CD8-positive, alpha-beta T cell (primary cell): ENCODE measurements at regions of chr1 and their contacts with region 1.

Region 1: DNA sequence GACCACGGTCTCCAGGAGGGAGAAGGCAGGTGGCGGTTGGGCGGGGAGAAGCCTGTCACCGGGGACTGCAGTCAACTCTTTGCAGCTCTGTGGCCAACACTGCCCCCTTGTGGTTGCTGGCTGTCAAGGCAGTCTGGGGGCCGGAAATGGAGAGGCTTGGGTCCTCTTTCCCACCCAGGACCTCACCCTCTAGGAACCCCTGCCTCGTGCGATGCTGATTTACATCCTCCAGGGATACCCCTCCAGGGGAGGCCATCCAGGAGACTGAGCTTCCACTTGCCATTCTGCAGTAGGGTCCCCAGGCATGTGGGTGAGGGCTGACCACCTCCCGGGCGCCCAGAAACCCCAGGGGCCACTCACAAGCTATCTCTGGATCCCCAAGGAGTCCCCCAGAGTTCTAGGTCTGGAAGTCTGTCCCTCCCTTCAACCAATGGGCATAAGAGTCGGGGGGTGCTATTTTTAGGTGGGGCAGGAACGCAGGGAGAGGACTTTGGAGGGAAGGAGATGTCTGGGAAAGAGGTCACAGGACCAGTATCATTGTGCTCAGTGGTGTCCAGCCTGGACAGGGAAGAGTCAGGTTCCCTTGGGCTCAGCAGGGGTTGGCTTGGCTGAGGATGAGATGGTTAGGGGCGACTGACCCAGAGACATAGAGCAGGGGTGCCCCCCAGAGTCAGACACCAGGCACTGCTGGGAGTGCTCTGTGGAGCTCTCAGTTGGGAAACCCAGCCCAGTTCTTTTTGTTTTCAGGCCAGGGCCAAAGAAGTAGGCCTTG is 7.1 kb upstream of the GPR61 start:
- DNase-seq: peak; percentile 83 to 97 (median 91)
- ATAC-seq: peak; percentile 90
- H3K4me3 ChIP-seq: peak overlapping the region; percentile 42 to 57
- H3K4me3 Mint-ChIP-seq: peak overlapping the region; percentile 80
- H3K27ac ChIP-seq: peak overlapping the region; percentile 17 to 52
- H3K27ac Mint-ChIP-seq: peak overlapping the region; percentile 67
- H3K4me1 ChIP-seq: peaks cover 31% of the 10 kb centered on the region
- H3K4me1 Mint-ChIP-seq: peaks cover 31% of the 10 kb centered on the region
- H3K27me3 ChIP-seq: no peaks in the 10 kb centered on the region
- H3K27me3 Mint-ChIP-seq: no peaks in the 10 kb centered on the region
- CTCF ChIP-seq: peak; percentile 88

Region 2: DNA sequence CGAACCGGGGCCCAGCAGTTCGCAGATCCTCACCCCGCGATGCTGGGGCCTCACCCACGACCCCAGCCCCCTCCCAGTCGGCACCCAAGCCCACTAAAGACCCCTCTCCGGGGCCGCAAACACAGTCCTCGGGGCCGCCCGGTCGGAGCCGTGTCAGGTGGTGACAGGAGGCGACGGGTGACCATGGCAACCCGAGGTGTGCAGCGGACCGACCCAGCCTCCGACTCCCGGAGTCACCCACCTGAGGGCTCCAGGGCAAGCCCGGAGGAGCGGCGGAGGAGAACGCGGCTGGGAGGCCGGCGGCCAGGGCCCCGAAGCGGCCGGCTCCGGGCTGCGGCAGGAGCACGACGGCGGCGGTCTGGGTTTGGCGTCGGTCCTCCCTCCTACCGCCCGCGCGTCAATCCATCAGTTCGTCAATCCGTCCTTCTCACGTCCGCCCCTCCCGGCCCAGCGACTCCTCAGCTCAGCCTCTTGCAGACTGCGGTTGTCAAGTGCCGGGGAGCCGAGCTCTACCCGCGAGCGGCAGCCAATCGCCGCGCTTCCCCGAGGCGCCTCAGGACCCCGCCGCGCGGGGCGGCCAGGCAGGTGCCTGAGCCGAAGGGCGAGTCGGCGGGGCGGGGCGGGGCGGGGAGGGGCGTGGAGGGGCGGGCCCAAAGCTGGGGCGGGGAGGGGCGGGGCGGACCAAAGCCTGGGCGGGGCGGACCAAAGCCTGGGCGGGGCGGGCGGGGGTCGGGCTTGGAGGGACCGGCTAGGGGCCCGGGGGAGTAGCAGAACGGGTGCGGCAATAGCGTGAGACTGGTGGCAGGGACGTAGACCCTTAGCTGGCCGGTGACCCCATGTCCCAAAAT is 490.7 kb before region 1 on chr1 and contains the start of gene WDR47:
- CTCF ChIA-PET with region 1: no interaction called
- POLR2A ChIA-PET with region 1: no interaction called
- intact Hi-C with region 1: no loop called
- DNase-seq: peak; percentile 92 to 99 (median 96)
- ATAC-seq: peak; percentile 96
- H3K4me3 ChIP-seq: peak within 1 kb of the TSS; percentile 97 to 99
- H3K4me3 Mint-ChIP-seq: peak within 1 kb of the TSS; percentile 93
- H3K27ac ChIP-seq: peak within 1 kb of the TSS; percentile 81 to 94
- H3K27ac Mint-ChIP-seq: peak within 1 kb of the TSS; percentile 92
- H3K4me1 ChIP-seq: peaks cover 10% of the 10 kb centered on the region
- H3K4me1 Mint-ChIP-seq: peaks cover 16% of the 10 kb centered on the region
- H3K27me3 ChIP-seq: no peaks in the 10 kb centered on the region
- H3K27me3 Mint-ChIP-seq: no peaks in the 10 kb centered on the region
- CTCF ChIP-seq: no peak
- total RNA-seq, gene WDR47: 31.5 to 32.6 TPM

Region 3: DNA sequence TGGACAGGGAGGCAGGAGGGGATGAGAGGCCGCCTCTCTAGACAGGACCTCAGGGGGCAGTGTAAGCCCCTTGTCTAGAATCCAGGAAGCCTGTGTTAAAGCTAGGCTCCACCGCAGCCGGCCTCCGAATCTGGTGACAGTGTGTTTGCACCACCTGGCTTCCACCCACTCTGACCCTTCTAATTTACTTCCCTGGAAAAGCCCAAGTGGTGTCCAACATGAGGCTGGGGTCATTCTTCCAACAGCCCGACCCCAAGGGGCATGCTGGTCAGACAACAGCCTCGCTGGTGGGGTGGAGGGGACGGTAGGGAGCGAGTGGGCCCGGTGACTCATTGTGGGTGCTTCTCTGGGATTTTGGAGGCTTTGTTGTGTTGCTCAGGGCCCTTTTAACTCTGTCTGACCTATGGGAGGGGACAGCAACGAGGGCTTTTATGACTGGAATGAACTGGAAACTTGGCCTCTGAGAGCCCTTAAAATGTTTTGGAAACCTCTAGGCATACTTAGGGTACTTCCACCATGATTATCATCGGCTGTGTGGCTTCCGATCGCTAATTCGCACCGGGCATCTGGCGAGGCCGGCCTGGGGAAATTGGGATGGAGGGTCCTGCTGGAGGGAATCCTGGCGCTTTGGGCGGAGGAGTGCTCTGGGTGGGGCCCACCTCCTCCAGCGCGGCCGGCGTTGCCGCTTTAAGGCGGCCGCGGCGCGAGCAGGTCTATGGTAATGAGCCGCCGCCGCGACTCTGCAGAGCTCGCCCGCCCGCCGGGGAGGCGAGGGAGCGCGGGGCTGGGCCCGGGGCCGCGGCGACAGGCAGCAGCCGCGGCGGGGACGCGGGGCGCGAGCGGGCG is 283.5 kb before region 1 on chr1 and contains the start of gene CELSR2:
- CTCF ChIA-PET with region 1: interaction called, 11 read pairs
- POLR2A ChIA-PET with region 1: no interaction called
- intact Hi-C with region 1: no loop called
- DNase-seq: peak; percentile 21 to 83 (median 57)
- ATAC-seq: peak; percentile 97
- H3K4me3 ChIP-seq: peak within 1 kb of the TSS; percentile 39 to 41
- H3K4me3 Mint-ChIP-seq: peak within 1 kb of the TSS; percentile 72
- H3K27ac ChIP-seq: no peak within 1 kb of the TSS
- H3K27ac Mint-ChIP-seq: no peak within 1 kb of the TSS
- H3K4me1 ChIP-seq: peaks cover 14% of the 10 kb centered on the region
- H3K4me1 Mint-ChIP-seq: peaks cover 14% of the 10 kb centered on the region
- H3K27me3 ChIP-seq: peaks cover 0 to 3% of the 10 kb centered on the region in 2 experiments
- H3K27me3 Mint-ChIP-seq: peaks cover 8% of the 10 kb centered on the region
- CTCF ChIP-seq: no peak
- total RNA-seq, gene CELSR2: 3.8 TPM

Region 4: DNA sequence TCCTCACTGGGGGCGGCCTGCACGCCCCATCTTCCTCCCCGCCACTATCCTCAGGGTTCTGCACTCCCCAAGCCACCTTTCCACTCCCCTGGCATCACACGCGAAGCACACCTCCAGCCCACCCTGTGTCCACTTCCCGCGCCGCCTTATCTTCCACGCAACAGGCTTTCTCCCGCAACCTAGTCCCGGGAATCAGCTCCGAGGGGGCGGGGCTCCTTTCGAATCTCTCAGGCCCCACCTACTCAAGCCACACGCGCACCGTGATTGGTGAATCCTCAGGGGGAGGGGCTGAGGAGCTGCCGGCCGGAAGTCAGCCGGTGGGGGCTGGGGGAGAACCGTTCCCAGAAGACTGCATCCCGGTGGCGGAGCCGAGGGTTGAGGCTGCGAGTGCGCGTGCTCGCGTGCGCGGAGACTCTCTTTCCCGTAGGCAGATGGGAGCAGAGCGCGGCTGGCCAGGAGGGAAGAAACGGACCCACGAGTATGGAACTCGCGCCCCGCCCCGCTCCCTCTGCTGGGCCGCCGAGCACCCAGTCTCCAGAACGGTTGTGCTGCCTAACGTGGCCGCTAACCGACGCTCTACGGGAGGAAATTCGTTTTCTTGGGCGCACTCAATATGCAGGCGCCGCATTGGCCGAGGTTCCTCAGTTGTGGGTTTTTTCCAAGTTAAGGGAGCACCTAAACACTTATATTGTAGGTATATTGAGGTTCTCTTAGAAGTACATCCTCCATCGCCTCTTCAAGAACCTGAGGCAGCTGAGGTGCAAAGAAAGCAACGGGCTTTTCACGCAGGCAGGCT is 249.4 kb before region 1 on chr1 and contains the start of gene PSRC1:
- CTCF ChIA-PET with region 1: interaction called, 50 read pairs
- POLR2A ChIA-PET with region 1: no interaction called
- intact Hi-C with region 1: no loop called
- DNase-seq: peak; percentile 73 to 94 (median 87)
- ATAC-seq: peak; percentile 94
- H3K4me3 ChIP-seq: peak within 1 kb of the TSS; percentile 72 to 82
- H3K4me3 Mint-ChIP-seq: peak within 1 kb of the TSS; percentile 93
- H3K27ac ChIP-seq: peak within 1 kb of the TSS; percentile 46 to 79
- H3K27ac Mint-ChIP-seq: peak within 1 kb of the TSS; percentile 88
- H3K4me1 ChIP-seq: peaks cover 12% of the 10 kb centered on the region
- H3K4me1 Mint-ChIP-seq: peaks cover 16% of the 10 kb centered on the region
- H3K27me3 ChIP-seq: no peaks in the 10 kb centered on the region
- H3K27me3 Mint-ChIP-seq: no peaks in the 10 kb centered on the region
- CTCF ChIP-seq: peak; percentile 40
- total RNA-seq, gene PSRC1: not detected

Region 5: GRCh38 chr1:109426278-109427170 is 106.0 kb before region 1 on chr1 and contains the start of gene PSMA5:
- CTCF ChIA-PET with region 1: interaction called, 11 read pairs
- POLR2A ChIA-PET with region 1: no interaction called
- intact Hi-C with region 1: loop called (anchors 1 to 2 kb)
- DNase-seq: peak; percentile 87 to 99 (median 93)
- ATAC-seq: peak; percentile 90
- H3K4me3 ChIP-seq: peak within 1 kb of the TSS; percentile 83 to 84
- H3K4me3 Mint-ChIP-seq: peak within 1 kb of the TSS; percentile 98
- H3K27ac ChIP-seq: peak within 1 kb of the TSS; percentile 80 to 90
- H3K27ac Mint-ChIP-seq: peak within 1 kb of the TSS; percentile 99
- H3K4me1 ChIP-seq: peaks cover 39% of the 10 kb centered on the region
- H3K4me1 Mint-ChIP-seq: peaks cover 39% of the 10 kb centered on the region
- H3K27me3 ChIP-seq: no peaks in the 10 kb centered on the region
- H3K27me3 Mint-ChIP-seq: no peaks in the 10 kb centered on the region
- CTCF ChIP-seq: no peak
- total RNA-seq, gene PSMA5: 30.9 to 32.6 TPM

Region 6: GRCh38 chr1:109499661-109500536 is 32.7 kb before region 1 on chr1:
- CTCF ChIA-PET with region 1: interaction called, 1,903 read pairs
- POLR2A ChIA-PET with region 1: interaction called, 132 read pairs
- intact Hi-C with region 1: loop called (anchors 1 kb)
- DNase-seq: peak; percentile 34 to 81 (median 74)
- ATAC-seq: peak; percentile 16
- H3K4me3 ChIP-seq: no peak overlapping the region
- H3K4me3 Mint-ChIP-seq: peak overlapping the region; percentile 63
- H3K27ac ChIP-seq: peak overlapping the region; percentile 85 to 94
- H3K27ac Mint-ChIP-seq: peak overlapping the region; percentile 97
- H3K4me1 ChIP-seq: peaks cover 94% of the 10 kb centered on the region
- H3K4me1 Mint-ChIP-seq: peaks cover 89% of the 10 kb centered on the region
- H3K27me3 ChIP-seq: no peaks in the 10 kb centered on the region
- H3K27me3 Mint-ChIP-seq: no peaks in the 10 kb centered on the region
- CTCF ChIP-seq: peak; percentile 59

Region 7: DNA sequence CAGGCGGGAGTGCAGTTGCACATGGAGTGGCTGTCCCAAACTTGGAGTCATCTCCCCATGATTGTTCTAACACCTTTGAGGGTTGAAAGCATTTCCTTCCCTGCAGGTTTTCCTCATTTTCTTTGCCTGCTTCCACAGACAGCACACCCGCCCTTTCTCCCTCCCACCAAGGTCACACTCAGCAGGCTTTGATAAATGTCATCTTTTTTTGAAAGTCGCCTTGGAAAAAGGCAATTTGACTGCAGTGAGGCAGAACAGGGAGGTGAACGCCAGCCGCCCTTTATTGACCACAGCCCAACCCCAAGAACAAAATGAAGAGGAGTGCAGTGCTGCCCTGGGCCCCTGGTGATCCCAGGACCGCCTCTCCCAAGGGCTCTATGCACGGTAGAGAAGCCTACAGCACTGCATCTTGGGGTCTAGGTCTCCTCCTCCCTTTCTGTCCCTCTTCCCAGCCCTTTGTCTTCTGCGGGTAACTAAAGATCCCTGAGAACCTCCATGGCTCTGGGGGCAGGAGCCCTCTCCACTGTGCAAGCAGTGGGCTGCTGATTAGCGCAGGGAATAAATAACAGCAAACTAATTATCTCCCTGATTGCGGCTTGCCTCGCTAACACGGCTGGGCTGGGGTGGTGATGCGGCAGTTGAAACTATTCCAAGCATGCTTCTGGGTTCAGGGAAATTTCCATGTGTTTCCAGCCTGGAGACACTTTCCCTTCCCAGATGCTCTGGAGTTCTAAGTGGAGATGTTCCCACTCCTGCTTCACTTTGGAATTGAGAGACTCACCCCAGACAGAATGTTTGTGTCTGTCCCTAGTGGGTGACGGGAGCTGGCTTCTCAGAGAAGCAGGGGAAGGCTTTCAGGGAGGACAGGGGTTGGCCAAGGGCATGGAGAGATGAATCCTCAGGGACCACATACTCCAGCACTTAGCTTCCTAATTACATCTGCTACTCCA is 11.3 kb before region 1 on chr1:
- CTCF ChIA-PET with region 1: interaction called, 1,903 read pairs
- POLR2A ChIA-PET with region 1: interaction called, 3 read pairs
- intact Hi-C with region 1: no loop called
- DNase-seq: no peak
- ATAC-seq: no peak
- H3K4me3 ChIP-seq: no peak overlapping the region
- H3K4me3 Mint-ChIP-seq: no peak overlapping the region
- H3K27ac ChIP-seq: no peak overlapping the region
- H3K27ac Mint-ChIP-seq: no peak overlapping the region
- H3K4me1 ChIP-seq: no peaks in the 10 kb centered on the region
- H3K4me1 Mint-ChIP-seq: no peaks in the 10 kb centered on the region
- H3K27me3 ChIP-seq: no peaks in the 10 kb centered on the region
- H3K27me3 Mint-ChIP-seq: no peaks in the 10 kb centered on the region
- CTCF ChIP-seq: no peak

Region 8: GRCh38 chr1:109620841-109621286 is 88.3 kb after region 1 on chr1:
- CTCF ChIA-PET with region 1: interaction called, 11 read pairs
- POLR2A ChIA-PET with region 1: no interaction called
- intact Hi-C with region 1: no loop called
- DNase-seq: peak; percentile 91 to 99 (median 97)
- ATAC-seq: peak; percentile 87
- H3K4me3 ChIP-seq: peak overlapping the region; percentile 90 to 92
- H3K4me3 Mint-ChIP-seq: peak overlapping the region; percentile 98
- H3K27ac ChIP-seq: peak overlapping the region; percentile 86 to 91
- H3K27ac Mint-ChIP-seq: peak overlapping the region; percentile 97
- H3K4me1 ChIP-seq: peaks cover 50% of the 10 kb centered on the region
- H3K4me1 Mint-ChIP-seq: peaks cover 64% of the 10 kb centered on the region
- H3K27me3 ChIP-seq: no peaks in the 10 kb centered on the region
- H3K27me3 Mint-ChIP-seq: no peaks in the 10 kb centered on the region
- CTCF ChIP-seq: no peak